ENCODE measurements at regions of chr5 and their contacts with region 1.

Region 1: DNA sequence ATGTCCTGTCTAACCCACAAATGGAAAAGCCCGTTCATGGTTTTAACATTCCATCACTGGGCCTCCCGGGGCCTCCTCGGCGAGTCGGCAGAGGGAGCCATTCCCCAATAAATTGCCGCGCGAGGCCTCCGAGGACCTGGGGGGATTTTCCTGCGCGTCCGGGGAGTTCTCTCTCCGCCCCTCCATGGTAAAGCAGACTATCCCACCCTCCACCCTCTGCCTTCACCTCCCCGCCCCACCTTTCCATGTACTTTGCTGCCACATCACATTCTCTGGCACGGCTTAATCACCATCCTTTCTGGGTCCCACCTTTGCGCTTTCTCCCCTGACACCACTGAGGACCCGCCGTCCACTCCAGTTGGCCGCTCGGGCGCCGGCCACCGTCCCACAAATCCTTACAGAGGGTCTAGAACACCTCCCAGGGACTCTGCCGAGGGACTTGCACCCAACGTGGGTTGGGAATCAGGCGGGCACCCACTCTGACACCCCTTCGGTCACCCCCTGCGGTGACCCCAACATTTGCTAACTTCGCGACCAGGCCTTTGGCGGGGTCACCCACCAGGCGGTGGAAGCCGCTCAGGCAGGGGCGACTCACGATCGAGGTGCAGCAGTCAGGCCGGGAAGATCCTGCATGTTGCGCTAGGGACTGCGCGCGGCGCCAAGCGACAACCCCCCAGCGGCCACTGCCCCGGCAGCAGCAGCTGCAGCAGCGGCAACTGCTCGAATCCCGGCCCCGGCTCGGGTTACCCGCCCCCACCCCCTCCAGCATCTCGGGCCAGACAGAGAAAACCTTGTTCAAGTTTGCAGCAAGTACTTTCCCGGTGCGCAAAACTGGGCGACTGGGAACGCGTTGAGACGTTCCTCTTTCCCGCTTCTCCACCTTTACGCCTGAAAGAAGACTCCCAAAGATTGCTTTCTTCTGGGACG is at the start of gene MEGF10:
- DNase-seq: peak; percentile 14 to 54 (median 18)
- ATAC-seq: peak; percentile 88
- H3K4me3 ChIP-seq: no peak within 1 kb of the TSS
- H3K27ac ChIP-seq: no peak within 1 kb of the TSS
- H3K4me1 ChIP-seq: peaks cover 0 to 4% of the 10 kb centered on the region in 2 experiments; a peak in 1 of 5 replicates
- H3K27me3 ChIP-seq: peaks cover 0 to 14% of the 10 kb centered on the region in 2 experiments; a peak in 2 of 5 replicates
- CTCF ChIP-seq: peak; percentile 55 to 65 (median 61)
- EP300 ChIP-seq: no peak
- POLR2A ChIP-seq: no peak
- RAD21 ChIP-seq: peak; percentile 42 to 64
- polyA plus RNA-seq, gene MEGF10: not detected

Region 2: GRCh38 chr5:127235136-127235535 is 55.1 kb before region 1 on chr5:
- CTCF ChIA-PET with region 1: no interaction called
- POLR2A ChIA-PET with region 1: no interaction called
- in situ Hi-C with region 1: no loop called
- intact Hi-C with region 1: no loop called
- DNase-seq: no peak
- ATAC-seq: no peak
- H3K4me3 ChIP-seq: no peak overlapping the region
- H3K27ac ChIP-seq: no peak overlapping the region
- H3K4me1 ChIP-seq: no peaks in the 10 kb centered on the region
- H3K27me3 ChIP-seq: peaks cover 0 to 2% of the 10 kb centered on the region in 2 experiments; a peak in 1 of 5 replicates
- CTCF ChIP-seq: no peak
- EP300 ChIP-seq: no peak
- POLR2A ChIP-seq: no peak
- RAD21 ChIP-seq: no peak

Region 3: DNA sequence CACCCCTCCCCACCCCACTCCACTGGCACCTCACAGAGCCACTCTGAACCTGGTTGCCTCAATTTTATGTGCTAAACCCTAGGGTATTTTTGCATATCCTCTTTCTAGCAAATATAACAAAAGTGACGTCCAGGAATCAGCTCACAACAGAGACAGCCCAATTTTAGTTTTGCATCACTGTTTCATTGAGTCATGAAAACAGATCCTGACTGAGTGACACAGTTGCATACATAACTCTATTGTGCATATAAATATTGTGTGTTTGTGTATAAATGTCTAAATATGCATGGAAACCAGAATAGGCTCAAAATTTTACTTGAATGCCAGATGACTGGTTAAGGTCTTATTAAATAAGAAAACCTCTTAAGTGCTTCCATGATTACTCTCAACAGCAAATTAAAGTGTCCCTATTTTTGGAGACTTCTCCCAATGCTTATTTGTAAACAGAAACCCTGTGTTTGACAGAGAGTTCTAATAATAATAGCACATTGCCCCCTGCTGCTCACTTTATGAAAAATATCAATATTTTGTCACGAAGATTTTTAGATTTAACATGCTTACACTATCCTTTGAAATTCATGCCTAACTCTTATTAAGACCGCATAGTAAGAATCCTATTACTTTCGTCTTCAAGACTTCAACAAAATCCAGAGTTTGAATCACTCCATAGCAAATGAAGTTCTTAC is 151.7 kb after region 1 on chr5:
- CTCF ChIA-PET with region 1: interaction called, 3 read pairs
- POLR2A ChIA-PET with region 1: no interaction called
- in situ Hi-C with region 1: no loop called
- intact Hi-C with region 1: loop called (anchors 5 kb)
- DNase-seq: peak in 1 of 4 experiments; percentile 5
- ATAC-seq: no peak
- H3K4me3 ChIP-seq: no peak overlapping the region
- H3K27ac ChIP-seq: no peak overlapping the region
- H3K4me1 ChIP-seq: no peaks in the 10 kb centered on the region
- H3K27me3 ChIP-seq: peaks cover 3 to 6% of the 10 kb centered on the region in 2 experiments; a peak in 2 of 5 replicates
- CTCF ChIP-seq: peak in 2 of 3 experiments; percentile 17 to 53; a peak in 3 of 6 replicates
- EP300 ChIP-seq: no peak
- POLR2A ChIP-seq: no peak
- RAD21 ChIP-seq: peak; percentile 57 to 59